ENCODE measurements at regions of chr12 and their contacts with region 1.

Region 1: GRCh38 chr12:124906606-124907261 is 7.7 kb downstream of the UBC start:
- DNase-seq: peak; percentile 49 to 92 (median 89)
- ATAC-seq: peak; percentile 90
- H3K4me3 ChIP-seq: no peak overlapping the region
- H3K4me3 Mint-ChIP-seq: peak overlapping the region in 1 of 10 donors; percentile 4
- H3K27ac ChIP-seq: no peak overlapping the region
- H3K27ac Mint-ChIP-seq: peak overlapping the region in 8 of 9 donors; percentile 1 to 67 (median 36)
- H3K4me1 ChIP-seq: peaks cover 4 to 10% of the 10 kb centered on the region in 2 donors
- H3K4me1 Mint-ChIP-seq: peaks cover 21 to 33% (median 27%) of the 10 kb centered on the region in 7 donors
- H3K27me3 ChIP-seq: no peaks in the 10 kb centered on the region
- H3K27me3 Mint-ChIP-seq: no peaks in the 10 kb centered on the region

Region 2: DNA sequence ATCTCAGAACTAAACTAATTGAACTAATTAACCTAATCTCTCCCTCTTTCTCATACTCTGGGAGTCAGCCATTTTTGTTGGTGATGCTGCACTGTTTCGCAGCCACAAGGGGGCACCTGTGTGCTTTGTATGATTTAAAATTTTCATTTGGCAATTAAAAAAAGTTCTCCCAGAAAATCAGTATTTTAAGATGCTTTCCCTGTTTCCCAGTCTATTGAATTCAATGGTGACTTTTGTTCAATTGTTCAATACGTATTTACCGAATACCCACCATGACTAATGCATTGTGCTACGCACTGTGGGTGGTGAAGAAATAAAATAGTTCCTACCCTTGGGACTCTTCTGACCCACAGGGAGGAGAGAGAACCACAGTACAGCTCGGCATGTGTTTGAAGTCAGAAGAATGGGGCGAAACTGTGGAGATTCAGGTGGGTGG is 870.0 kb before region 1 on chr12:
- CTCF ChIA-PET with region 1: no interaction called
- POLR2A ChIA-PET with region 1: no interaction called
- intact Hi-C with region 1: loop called in 1 of 2 experiments (anchors 2 kb)
- DNase-seq: peak in 7 of 9 donors; percentile 14 to 57 (median 37)
- ATAC-seq: peak; percentile 72
- H3K4me3 ChIP-seq: no peak overlapping the region
- H3K4me3 Mint-ChIP-seq: no peak overlapping the region
- H3K27ac ChIP-seq: no peak overlapping the region
- H3K27ac Mint-ChIP-seq: no peak overlapping the region
- H3K4me1 ChIP-seq: no peaks in the 10 kb centered on the region
- H3K4me1 Mint-ChIP-seq: no peaks in the 10 kb centered on the region
- H3K27me3 ChIP-seq: no peaks in the 10 kb centered on the region
- H3K27me3 Mint-ChIP-seq: peaks cover 8 to 10% (median 9%) of the 10 kb centered on the region in 5 donors

Region 3: DNA sequence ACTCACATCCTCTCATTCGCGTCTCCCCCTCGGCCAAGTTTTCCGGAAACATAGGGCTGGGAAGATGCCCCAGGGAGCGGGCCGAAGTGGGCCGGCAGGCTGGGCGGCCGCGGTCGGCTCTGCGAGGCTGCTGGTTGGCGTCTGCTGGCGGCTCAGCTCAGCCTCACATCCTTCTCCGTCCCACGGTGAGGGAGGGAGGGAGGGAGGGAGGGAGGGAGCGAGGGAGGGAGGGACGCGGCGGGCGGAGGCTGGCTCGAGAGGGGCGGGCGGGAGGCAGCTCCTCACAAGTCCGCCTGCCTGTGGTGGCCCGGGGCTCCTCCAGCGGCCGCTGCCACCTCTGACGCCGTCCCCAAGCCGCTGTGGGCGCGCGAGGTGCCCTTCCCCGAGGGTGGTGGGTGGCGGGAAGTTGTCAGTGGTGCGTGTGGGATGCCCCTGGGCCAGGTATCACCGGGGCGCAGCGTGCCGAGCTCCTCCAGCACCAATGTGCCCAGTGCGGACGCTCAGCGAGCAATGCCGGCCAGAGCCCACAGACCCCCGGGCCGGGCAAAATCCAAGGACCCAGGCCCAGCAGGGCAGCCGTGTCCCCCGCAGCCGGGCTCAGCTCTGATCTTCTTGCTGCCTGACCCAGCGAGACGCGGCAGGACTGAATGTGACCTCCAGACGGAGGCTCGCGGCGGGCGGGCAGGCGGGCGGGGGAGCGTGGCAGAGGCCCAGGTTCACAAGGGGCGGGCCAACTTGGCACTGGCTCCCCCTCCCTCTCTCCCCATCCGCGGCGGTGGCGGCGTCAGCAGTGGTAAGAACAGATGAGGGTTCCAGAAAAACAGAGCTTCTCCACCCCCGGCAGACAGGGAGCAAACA is 517.8 kb before region 1 on chr12:
- CTCF ChIA-PET with region 1: no interaction called
- POLR2A ChIA-PET with region 1: no interaction called
- intact Hi-C with region 1: no loop called
- DNase-seq: peak; percentile 49 to 78 (median 63)
- ATAC-seq: peak; percentile 80
- H3K4me3 ChIP-seq: peak overlapping the region; percentile 27
- H3K4me3 Mint-ChIP-seq: peak overlapping the region; percentile 50 to 79 (median 68)
- H3K27ac ChIP-seq: peak overlapping the region; percentile 54
- H3K27ac Mint-ChIP-seq: peak overlapping the region in 7 of 9 donors; percentile 8 to 68 (median 43)
- H3K4me1 ChIP-seq: peaks cover 4 to 20% of the 10 kb centered on the region in 2 donors
- H3K4me1 Mint-ChIP-seq: peaks cover 18 to 45% (median 38%) of the 10 kb centered on the region in 7 donors
- H3K27me3 ChIP-seq: no peaks in the 10 kb centered on the region
- H3K27me3 Mint-ChIP-seq: no peaks in the 10 kb centered on the region

Region 4: GRCh38 chr12:124655698-124656516 is 250.8 kb before region 1 on chr12:
- CTCF ChIA-PET with region 1: no interaction called
- POLR2A ChIA-PET with region 1: no interaction called
- intact Hi-C with region 1: no loop called
- DNase-seq: no peak
- ATAC-seq: peak; percentile 60
- H3K4me3 ChIP-seq: no peak overlapping the region
- H3K4me3 Mint-ChIP-seq: no peak overlapping the region
- H3K27ac ChIP-seq: no peak overlapping the region
- H3K27ac Mint-ChIP-seq: no peak overlapping the region
- H3K4me1 ChIP-seq: no peaks in the 10 kb centered on the region
- H3K4me1 Mint-ChIP-seq: peaks cover 0 to 8% (median 0%) of the 10 kb centered on the region in 7 donors
- H3K27me3 ChIP-seq: no peaks in the 10 kb centered on the region
- H3K27me3 Mint-ChIP-seq: peaks cover 0 to 10% (median 0%) of the 10 kb centered on the region in 5 donors

Region 5: GRCh38 chr12:124754949-124755800 is 151.6 kb before region 1 on chr12:
- CTCF ChIA-PET with region 1: no interaction called
- POLR2A ChIA-PET with region 1: no interaction called
- intact Hi-C with region 1: no loop called
- DNase-seq: no peak
- ATAC-seq: peak; percentile 53
- H3K4me3 ChIP-seq: no peak overlapping the region
- H3K4me3 Mint-ChIP-seq: peak overlapping the region in 2 of 10 donors; percentile 3 to 52
- H3K27ac ChIP-seq: no peak overlapping the region
- H3K27ac Mint-ChIP-seq: peak overlapping the region in 2 of 9 donors; percentile 54 to 64
- H3K4me1 ChIP-seq: peaks cover 0 to 12% of the 10 kb centered on the region in 2 donors
- H3K4me1 Mint-ChIP-seq: peaks cover 0 to 19% (median 8%) of the 10 kb centered on the region in 7 donors
- H3K27me3 ChIP-seq: no peaks in the 10 kb centered on the region
- H3K27me3 Mint-ChIP-seq: peaks cover 0 to 20% (median 8%) of the 10 kb centered on the region in 5 donors

Region 6: GRCh38 chr12:124837958-124838803 is 68.6 kb before region 1 on chr12:
- CTCF ChIA-PET with region 1: no interaction called
- POLR2A ChIA-PET with region 1: no interaction called
- intact Hi-C with region 1: no loop called
- DNase-seq: no peak
- ATAC-seq: no peak
- H3K4me3 ChIP-seq: no peak overlapping the region
- H3K4me3 Mint-ChIP-seq: no peak overlapping the region
- H3K27ac ChIP-seq: no peak overlapping the region
- H3K27ac Mint-ChIP-seq: no peak overlapping the region
- H3K4me1 ChIP-seq: no peaks in the 10 kb centered on the region
- H3K4me1 Mint-ChIP-seq: peaks cover 0 to 2% (median 0%) of the 10 kb centered on the region in 7 donors
- H3K27me3 ChIP-seq: no peaks in the 10 kb centered on the region
- H3K27me3 Mint-ChIP-seq: no peaks in the 10 kb centered on the region

Region 7: DNA sequence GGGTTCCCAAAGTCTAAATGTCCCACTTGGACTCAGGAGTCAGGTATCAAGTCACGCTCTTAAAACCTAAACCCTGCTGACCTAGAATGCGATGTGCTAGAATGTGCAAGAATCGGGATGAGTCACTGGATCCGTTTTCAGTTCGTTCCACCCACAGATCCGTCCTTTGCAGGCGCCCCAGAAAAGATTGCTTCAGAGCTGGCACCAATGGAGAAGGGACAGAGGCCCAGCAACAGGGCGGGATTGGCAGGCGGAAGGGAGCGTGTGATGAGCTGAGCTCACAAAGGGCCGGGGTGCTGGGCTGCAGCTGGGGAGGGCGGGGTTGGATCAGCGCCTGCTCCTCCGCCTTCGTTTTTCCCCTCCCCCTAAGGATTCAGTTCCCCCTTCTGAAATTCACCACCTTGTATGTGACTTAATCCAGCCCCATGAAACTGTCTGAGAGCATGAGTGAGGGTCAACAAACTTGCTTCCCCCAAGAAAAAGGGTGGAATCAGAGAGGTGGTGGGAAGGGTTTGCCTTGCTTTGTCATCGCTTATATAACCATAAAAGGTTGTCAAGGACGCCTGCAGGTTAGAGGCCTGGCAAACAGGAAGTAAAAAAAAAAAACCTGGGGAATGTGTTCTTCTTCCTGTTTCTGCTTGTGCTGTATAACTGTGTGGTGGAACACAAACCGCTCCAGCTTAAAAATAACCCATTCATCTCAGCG is 10.6 kb after region 1 on chr12:
- CTCF ChIA-PET with region 1: interaction called, 25 read pairs
- POLR2A ChIA-PET with region 1: interaction called, 158 read pairs
- intact Hi-C with region 1: loop called in 1 of 2 experiments (anchors 1 kb)
- DNase-seq: peak; percentile 73 to 97 (median 93)
- ATAC-seq: peak; percentile 81
- H3K4me3 ChIP-seq: peak overlapping the region; percentile 60
- H3K4me3 Mint-ChIP-seq: peak overlapping the region; percentile 83 to 100 (median 88)
- H3K27ac ChIP-seq: peak overlapping the region; percentile 84
- H3K27ac Mint-ChIP-seq: peak overlapping the region; percentile 90 to 100 (median 98)
- H3K4me1 ChIP-seq: peaks cover 57 to 70% of the 10 kb centered on the region in 2 donors
- H3K4me1 Mint-ChIP-seq: peaks cover 64 to 98% (median 90%) of the 10 kb centered on the region in 7 donors
- H3K27me3 ChIP-seq: no peaks in the 10 kb centered on the region
- H3K27me3 Mint-ChIP-seq: peaks cover 0 to 16% (median 0%) of the 10 kb centered on the region in 5 donors

Region 8: GRCh38 chr12:124940549-124941527 is 34.1 kb after region 1 on chr12:
- CTCF ChIA-PET with region 1: interaction called, 167 read pairs
- POLR2A ChIA-PET with region 1: interaction called, 62 read pairs
- intact Hi-C with region 1: loop called (anchors 1 kb)
- DNase-seq: peak; percentile 48 to 85 (median 78)
- ATAC-seq: peak; percentile 74
- H3K4me3 ChIP-seq: peak overlapping the region; percentile 97
- H3K4me3 Mint-ChIP-seq: no peak overlapping the region
- H3K27ac ChIP-seq: peak overlapping the region; percentile 66
- H3K27ac Mint-ChIP-seq: no peak overlapping the region
- H3K4me1 ChIP-seq: peaks cover 19 to 26% of the 10 kb centered on the region in 2 donors
- H3K4me1 Mint-ChIP-seq: peaks cover 0 to 22% (median 0%) of the 10 kb centered on the region in 7 donors
- H3K27me3 ChIP-seq: no peaks in the 10 kb centered on the region
- H3K27me3 Mint-ChIP-seq: no peaks in the 10 kb centered on the region

Region 9: DNA sequence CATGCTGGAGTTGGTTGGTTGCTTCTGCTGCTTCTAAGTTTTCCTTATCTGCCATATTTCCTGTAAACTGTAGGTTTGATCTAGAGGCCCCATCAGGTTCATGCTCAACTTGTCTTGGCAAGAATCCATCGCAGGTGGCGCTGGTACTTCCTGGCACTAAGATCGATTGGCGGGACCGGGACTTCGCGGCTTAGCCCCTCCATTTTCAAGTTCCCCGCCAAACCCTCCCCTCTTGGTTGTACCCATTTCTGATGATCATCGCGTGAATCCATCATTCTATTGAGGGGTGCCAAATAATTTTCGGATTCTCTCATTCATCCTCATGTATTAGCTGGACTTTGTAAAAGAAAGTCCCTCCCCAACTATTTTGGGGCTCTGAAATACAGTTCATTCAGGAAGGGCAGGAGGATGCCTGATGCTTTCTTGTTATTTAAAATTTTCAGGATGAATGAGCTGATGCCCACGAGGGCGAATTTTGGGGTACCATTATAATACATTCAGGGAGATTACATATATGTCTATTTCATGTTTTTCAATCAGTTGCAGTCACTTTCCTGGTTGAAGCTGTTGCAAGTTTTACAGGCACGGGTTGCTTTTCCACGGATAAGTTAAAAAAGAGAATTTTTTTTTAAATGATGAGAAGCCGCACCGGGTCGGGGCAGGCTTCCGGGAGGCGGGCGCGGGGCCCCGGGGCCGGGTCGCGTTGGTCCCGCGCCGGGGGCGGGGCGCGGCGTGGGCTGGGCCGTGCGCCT is 86.3 kb after region 1 on chr12:
- CTCF ChIA-PET with region 1: no interaction called
- POLR2A ChIA-PET with region 1: no interaction called
- intact Hi-C with region 1: loop called in 1 of 2 experiments (anchors 1 kb)
- DNase-seq: peak; percentile 67 to 86 (median 81)
- ATAC-seq: peak; percentile 82
- H3K4me3 ChIP-seq: peak overlapping the region; percentile 67
- H3K4me3 Mint-ChIP-seq: peak overlapping the region; percentile 79 to 97 (median 86)
- H3K27ac ChIP-seq: peak overlapping the region; percentile 62
- H3K27ac Mint-ChIP-seq: peak overlapping the region; percentile 14 to 85 (median 80)
- H3K4me1 ChIP-seq: peaks cover 11 to 29% of the 10 kb centered on the region in 2 donors
- H3K4me1 Mint-ChIP-seq: peaks cover 25 to 42% (median 34%) of the 10 kb centered on the region in 7 donors
- H3K27me3 ChIP-seq: no peaks in the 10 kb centered on the region
- H3K27me3 Mint-ChIP-seq: no peaks in the 10 kb centered on the region

Measured in naive thymus-derived CD4-positive, alpha-beta T cell (primary cell).